Mammary epithelial cell (primary cell): ENCODE measurements at regions of chr12 and their contacts with region 1.

Region 1: DNA sequence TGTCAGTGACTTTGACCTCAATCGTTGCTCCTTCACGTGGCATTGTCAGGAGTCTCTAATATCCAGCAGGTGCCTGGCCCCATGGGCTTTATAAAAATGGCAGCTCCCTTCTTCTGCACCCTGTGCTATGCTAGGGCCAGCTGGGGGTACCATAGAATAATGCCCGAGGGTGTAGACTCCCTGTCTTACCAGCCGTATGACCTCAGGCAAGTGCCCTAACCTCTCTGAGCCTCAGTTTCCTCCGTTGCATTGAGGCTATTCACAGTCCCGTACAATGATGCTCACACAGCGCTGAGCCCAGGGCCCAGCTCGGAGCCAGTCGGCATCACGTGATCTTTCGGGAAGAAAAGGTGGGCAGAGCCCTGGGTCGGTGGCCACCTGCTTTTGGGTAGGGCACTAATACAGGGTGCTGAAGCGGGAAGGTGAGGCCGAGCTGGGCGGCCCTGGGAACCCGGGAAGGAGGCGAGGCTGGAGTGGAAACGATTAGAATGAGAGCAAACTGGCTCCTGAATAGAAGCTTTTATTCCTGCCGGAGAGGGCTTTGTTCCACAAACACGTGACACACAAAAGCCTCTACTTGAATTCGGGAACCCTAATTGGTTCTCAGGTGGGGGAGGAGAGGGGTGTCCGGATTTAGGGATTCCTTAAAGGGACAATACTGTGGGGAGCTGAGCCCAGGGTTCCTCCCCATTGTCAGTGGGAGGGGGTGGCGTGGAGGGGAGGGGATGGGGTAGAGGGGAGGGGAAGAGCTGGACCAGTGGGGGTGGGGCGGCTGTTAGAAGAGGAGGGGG is 19.9 kb upstream of the MSI1 start:
- DNase-seq: no peak
- H3K4me3 ChIP-seq: no peak overlapping the region
- H3K27ac ChIP-seq: no peak overlapping the region
- H3K4me1 ChIP-seq: no peaks in the 10 kb centered on the region
- H3K27me3 ChIP-seq: no peaks in the 10 kb centered on the region
- CTCF ChIP-seq: no peak

Region 2: DNA sequence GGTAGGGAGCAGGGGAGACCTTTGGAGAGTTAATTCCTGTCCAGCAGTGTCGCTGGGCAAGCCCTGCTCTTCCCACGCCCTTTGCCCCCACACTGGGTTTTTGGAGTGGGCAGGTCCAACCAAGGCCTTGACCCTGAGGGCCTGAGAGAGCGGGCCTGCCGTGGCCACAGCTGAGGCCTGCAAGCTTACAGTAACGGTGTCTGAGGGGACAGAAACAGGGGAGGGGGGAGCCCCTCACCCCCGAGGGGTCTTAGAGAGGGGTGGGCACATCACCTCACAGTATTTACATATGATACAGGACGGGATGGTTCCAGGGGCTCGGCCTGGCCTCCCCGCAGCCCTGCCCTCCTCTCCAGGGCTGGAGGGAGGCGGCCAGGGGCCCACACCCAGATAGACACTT is 46.7 kb before region 1 on chr12:
- CTCF ChIA-PET with region 1: no interaction called
- dilution Hi-C with region 1: loop called (anchors 5 kb)
- in situ Hi-C with region 1: no loop called
- intact Hi-C with region 1: no loop called
- DNase-seq: no peak
- H3K4me3 ChIP-seq: no peak overlapping the region
- H3K27ac ChIP-seq: no peak overlapping the region
- H3K4me1 ChIP-seq: no peaks in the 10 kb centered on the region
- H3K27me3 ChIP-seq: no peaks in the 10 kb centered on the region
- CTCF ChIP-seq: no peak